Transverse colon (tissue), 4 donors: ENCODE measurements at regions of chr4 and their contacts with region 1.

Region 1: DNA sequence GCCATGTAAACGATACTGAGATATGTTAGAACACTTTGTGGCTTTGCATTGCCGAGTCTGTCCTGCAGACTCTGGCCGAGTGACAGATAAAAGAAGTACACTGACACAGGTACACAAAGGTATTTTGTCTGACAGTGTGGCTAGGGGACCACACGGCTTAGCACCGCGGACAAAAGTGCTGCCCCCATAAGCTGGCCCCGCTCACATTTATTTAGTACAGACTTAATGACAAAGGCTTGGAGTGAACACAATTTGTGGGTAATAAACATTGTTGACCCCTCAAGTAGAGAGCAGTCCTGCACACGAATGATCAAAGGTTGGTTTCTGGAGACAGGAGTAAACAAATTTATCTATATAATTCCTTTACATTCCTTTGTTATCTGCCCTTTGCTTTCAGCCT is 976.8 kb downstream of the TRAM1L1 start:
- DNase-seq: no peak
- H3K4me3 ChIP-seq: no peak overlapping the region
- H3K27ac ChIP-seq: no peak overlapping the region
- H3K4me1 ChIP-seq: no peaks in the 10 kb centered on the region
- H3K27me3 ChIP-seq: no peaks in the 10 kb centered on the region
- CTCF ChIP-seq: no peak
- EP300 ChIP-seq: no peak
- POLR2A ChIP-seq: no peak

Region 2: DNA sequence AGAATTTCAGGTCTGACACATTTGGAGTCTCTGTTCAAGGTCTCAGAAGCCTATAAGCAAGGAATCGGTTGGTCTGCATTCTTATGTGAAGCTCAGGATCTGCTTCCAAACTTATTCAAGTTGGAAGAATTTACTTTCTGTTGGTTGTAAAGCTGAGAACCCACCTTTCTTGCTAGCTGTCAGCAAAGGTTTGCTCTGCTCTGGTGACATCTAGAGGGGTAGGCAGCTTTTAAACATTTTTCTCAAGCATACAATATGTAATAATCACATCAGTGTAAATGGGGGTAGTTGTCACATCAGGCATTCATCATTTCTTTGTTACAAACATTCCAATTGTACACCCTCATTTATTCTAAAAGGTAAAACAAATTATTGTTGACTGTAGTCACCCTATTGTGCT is 41.5 kb after region 1 on chr4:
- in situ Hi-C with region 1: no loop called
- intact Hi-C with region 1: loop called (anchors 2 kb)
- DNase-seq: no peak
- H3K4me3 ChIP-seq: no peak overlapping the region
- H3K27ac ChIP-seq: no peak overlapping the region
- H3K4me1 ChIP-seq: no peaks in the 10 kb centered on the region
- H3K27me3 ChIP-seq: no peaks in the 10 kb centered on the region
- CTCF ChIP-seq: no peak
- EP300 ChIP-seq: no peak
- POLR2A ChIP-seq: no peak